Prostate gland (tissue), 2 donors: ENCODE measurements at regions of chr15 and their contacts with region 1.

Region 1: DNA sequence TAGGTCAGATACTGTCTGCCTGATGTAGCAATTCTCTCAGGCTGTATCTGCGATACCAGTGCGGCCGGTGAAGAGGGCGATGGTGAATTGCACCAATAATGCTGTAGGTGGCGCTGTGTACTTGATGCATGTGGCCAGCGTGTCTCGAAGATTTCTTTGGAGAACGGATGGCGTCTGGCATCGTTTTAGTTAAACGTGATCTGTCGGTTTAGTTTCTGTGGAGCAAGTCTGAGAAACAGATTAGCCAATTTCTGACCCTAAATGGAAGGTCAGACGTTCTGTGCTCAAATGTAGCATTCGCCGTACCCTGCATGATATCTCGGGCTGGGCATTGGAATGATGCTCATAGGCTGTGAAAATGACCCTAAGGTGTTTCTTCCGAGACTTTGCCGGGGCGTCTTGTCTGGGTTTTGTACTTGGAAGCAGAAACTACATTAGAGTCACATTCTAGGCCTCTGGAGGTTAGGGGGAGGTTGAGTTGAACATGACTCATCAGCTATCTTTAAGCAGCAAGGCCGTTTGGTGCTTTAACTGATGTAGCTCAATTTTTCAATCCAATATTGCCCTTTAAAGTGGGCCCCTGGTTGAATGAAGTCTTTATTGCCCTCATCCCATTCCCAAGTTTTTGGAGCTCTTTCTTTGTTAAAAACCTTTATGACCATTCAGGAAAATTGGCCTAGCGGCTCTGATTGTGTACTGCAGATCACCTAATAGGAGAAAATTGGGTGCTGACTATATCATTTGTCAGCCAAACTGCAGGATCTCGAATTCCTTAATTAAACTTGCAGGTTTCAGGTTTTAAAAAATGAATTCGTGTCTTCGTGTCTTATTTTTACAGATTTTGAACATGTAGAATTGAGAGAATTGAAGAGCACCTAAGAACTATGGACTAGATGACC is 80.0 kb downstream of the SQOR start:
- DNase-seq: peak; percentile 53
- H3K4me3 ChIP-seq: no peak overlapping the region
- H3K27ac ChIP-seq: no peak overlapping the region
- H3K4me1 ChIP-seq: no peaks in the 10 kb centered on the region
- H3K27me3 ChIP-seq: no peaks in the 10 kb centered on the region
- CTCF ChIP-seq: peak; percentile 41 to 78 (median 70)
- POLR2A ChIP-seq: no peak

Region 2: GRCh38 chr15:45795440-45796069 is 80.7 kb after region 1 on chr15:
- intact Hi-C with region 1: loop called (anchors 10 kb)
- DNase-seq: peak; percentile 61
- H3K4me3 ChIP-seq: no peak overlapping the region
- H3K27ac ChIP-seq: no peak overlapping the region
- H3K4me1 ChIP-seq: no peaks in the 10 kb centered on the region
- H3K27me3 ChIP-seq: no peaks in the 10 kb centered on the region
- CTCF ChIP-seq: peak; percentile 28 to 81 (median 72)
- POLR2A ChIP-seq: no peak

Region 3: DNA sequence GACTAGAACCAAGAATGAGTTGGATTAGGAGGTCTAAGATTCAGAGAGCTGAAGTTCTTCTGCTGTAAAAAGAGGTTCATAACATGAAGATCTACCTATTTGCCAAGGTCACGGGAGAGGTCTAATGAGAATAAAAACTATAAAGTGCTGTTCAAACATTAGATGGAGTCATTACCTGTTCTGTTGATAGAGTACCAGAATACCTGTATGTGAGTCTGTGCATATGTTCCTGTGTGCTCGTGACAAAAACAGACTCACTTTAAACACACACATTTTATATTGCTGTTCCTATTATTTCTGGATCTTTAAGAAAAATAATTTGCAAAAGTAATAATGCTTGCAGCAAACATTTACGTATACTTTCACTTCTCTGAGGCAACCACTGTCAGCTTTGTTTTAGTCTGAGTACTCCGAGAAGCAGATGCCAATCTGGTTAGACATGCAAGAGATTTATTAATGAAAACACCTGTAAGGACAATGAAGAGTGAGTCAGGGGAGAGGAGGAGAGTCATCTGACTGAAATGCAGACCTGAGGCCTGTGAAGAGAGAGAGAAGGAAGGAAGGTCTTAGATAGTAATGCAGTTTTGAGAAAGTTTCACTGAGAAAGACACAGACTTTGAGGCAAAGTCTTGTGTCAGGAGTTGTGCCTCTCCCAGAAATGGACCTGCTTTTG is 141.2 kb after region 1 on chr15:
- intact Hi-C with region 1: loop called (anchors 10 kb)
- DNase-seq: no peak
- H3K4me3 ChIP-seq: no peak overlapping the region
- H3K27ac ChIP-seq: peak overlapping the region; percentile 56 to 57
- H3K4me1 ChIP-seq: peaks cover 5% of the 10 kb centered on the region
- H3K27me3 ChIP-seq: no peaks in the 10 kb centered on the region
- CTCF ChIP-seq: no peak
- POLR2A ChIP-seq: no peak

Region 4: GRCh38 chr15:46041907-46042306 is 327.1 kb after region 1 on chr15:
- intact Hi-C with region 1: no loop called
- DNase-seq: no peak
- H3K4me3 ChIP-seq: no peak overlapping the region
- H3K27ac ChIP-seq: no peak overlapping the region
- H3K4me1 ChIP-seq: no peaks in the 10 kb centered on the region
- H3K27me3 ChIP-seq: no peaks in the 10 kb centered on the region
- CTCF ChIP-seq: no peak
- POLR2A ChIP-seq: no peak

Region 5: GRCh38 chr15:46280762-46281542 is 566.1 kb after region 1 on chr15:
- intact Hi-C with region 1: loop called (anchors 5 kb)
- DNase-seq: peak; percentile 31
- H3K4me3 ChIP-seq: no peak overlapping the region
- H3K27ac ChIP-seq: no peak overlapping the region
- H3K4me1 ChIP-seq: no peaks in the 10 kb centered on the region
- H3K27me3 ChIP-seq: no peaks in the 10 kb centered on the region
- CTCF ChIP-seq: peak in 2 of 4 experiments; percentile 42 to 43
- POLR2A ChIP-seq: no peak